Pancreas (tissue), 10 donors: ENCODE measurements at regions of chr9 and their contacts with region 1.

Region 1: GRCh38 chr9:125407974-125408900 is 146.6 kb downstream of the GAPVD1 start:
- DNase-seq: peak; percentile 44 to 91 (median 76)
- ATAC-seq: peak; percentile 85 to 96 (median 92)
- H3K4me3 ChIP-seq: peak overlapping the region; percentile 31 to 58 (median 52)
- H3K27ac ChIP-seq: no peak overlapping the region
- H3K4me1 ChIP-seq: peaks cover 0 to 3% (median 0%) of the 10 kb centered on the region in 3 donors
- H3K27me3 ChIP-seq: no peaks in the 10 kb centered on the region
- CTCF ChIP-seq: peak; percentile 58 to 87 (median 81)

Region 2: GRCh38 chr9:126228781-126229444 is 820.7 kb after region 1 on chr9:
- intact Hi-C with region 1: loop called in 2 of 3 experiments (anchors 5 kb)
- DNase-seq: peak; percentile 39 to 86 (median 71)
- ATAC-seq: peak; percentile 60 to 98 (median 96)
- H3K4me3 ChIP-seq: no peak overlapping the region
- H3K27ac ChIP-seq: no peak overlapping the region
- H3K4me1 ChIP-seq: no peaks in the 10 kb centered on the region
- H3K27me3 ChIP-seq: no peaks in the 10 kb centered on the region
- CTCF ChIP-seq: peak; percentile 85 to 95 (median 92)

Region 3: DNA sequence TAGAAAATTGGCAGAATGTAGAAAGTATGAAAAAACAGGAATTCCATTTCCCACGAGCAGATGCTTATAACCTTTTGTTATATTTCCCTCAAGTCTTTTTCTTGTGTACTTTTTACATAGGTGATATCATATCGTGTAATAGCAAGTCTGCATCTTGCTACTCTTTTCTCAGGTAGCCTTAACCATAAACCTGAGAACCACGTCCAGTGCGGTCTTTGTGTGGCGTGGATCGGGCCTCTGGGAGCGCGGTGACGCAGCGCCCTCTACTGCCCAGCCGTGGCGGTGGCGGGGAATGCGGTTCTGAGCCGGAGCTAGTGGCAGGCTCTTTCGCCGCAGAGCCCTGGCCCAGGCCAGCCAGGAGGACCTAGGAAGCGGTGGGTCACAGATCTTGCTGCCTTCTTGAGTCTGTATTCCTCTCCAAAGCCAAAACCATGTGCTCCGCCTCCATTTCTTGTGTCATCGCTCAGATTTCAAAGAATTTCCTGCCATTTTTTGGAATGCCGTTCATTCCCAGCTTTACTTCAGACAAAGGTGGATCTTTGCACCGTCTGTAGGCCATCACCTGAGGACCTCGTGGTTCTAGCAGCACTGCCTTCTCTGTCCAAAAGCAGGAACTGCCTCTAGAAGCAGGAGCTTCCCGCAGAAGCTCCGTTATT is 990.3 kb after region 1 on chr9:
- intact Hi-C with region 1: loop called in 1 of 3 experiments (anchors 5 kb)
- DNase-seq: peak; percentile 54 to 96 (median 78)
- ATAC-seq: peak; percentile 89 to 98 (median 96)
- H3K4me3 ChIP-seq: no peak overlapping the region
- H3K27ac ChIP-seq: no peak overlapping the region
- H3K4me1 ChIP-seq: no peaks in the 10 kb centered on the region
- H3K27me3 ChIP-seq: no peaks in the 10 kb centered on the region
- CTCF ChIP-seq: peak; percentile 83 to 96 (median 89)

Region 4: GRCh38 chr9:126482361-126483044 is 1074.3 kb after region 1 on chr9:
- intact Hi-C with region 1: loop called in 1 of 3 experiments (anchors 10 kb)
- DNase-seq: no peak
- ATAC-seq: no peak
- H3K4me3 ChIP-seq: no peak overlapping the region
- H3K27ac ChIP-seq: no peak overlapping the region
- H3K4me1 ChIP-seq: no peaks in the 10 kb centered on the region
- H3K27me3 ChIP-seq: no peaks in the 10 kb centered on the region
- CTCF ChIP-seq: no peak